ENCODE measurements at regions of chr1 and their contacts with region 1.

Region 1: GRCh38 chr1:200620273-200621131 is at the start of gene KIF14:
- DNase-seq: peak; percentile 98
- total RNA-seq, gene KIF14: 0.14 to 0.32 TPM

Region 2: GRCh38 chr1:199675937-199676336 is 944.6 kb before region 1 on chr1:
- intact Hi-C with region 1: no loop called
- DNase-seq: no peak

Region 3: GRCh38 chr1:200372080-200372884 is 248.2 kb before region 1 on chr1:
- intact Hi-C with region 1: no loop called
- DNase-seq: no peak

Region 4: GRCh38 chr1:200802865-200803512 is 182.5 kb after region 1 on chr1:
- intact Hi-C with region 1: loop called (anchors 5 to 10 kb)
- DNase-seq: peak; percentile 87

Region 5: GRCh38 chr1:200837931-200838571 is 217.5 kb after region 1 on chr1:
- intact Hi-C with region 1: loop called in 1 of 2 experiments (anchors 5 kb)
- DNase-seq: no peak